ENCODE measurements at regions of chr1 and their contacts with region 1.

Region 1: DNA sequence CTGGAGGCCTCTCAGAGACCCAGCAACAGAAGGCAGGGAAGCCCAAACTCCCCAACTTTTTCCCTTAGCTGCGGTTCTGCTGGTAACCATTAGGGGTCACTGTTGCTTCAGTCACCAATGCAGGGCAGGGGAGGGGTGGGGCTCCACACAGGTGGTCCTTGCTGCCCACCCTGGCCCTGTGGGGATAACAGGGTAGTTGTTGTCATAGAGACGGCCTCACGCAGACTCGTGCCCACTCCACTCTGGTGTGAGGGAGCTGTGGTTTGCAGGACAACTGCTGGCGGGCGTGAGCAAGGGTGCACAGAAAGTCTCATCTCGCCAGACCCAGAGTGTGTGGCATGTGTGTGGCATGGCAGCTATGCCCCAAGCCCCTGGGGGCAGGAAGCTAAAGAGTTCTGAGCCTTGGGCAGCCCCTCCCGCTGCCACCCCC is 19.9 kb downstream of the INSRR start:
- DNase-seq: peak; percentile 58
- H3K4me3 Mint-ChIP-seq: no peak overlapping the region
- H3K27ac Mint-ChIP-seq: no peak overlapping the region
- H3K4me1 Mint-ChIP-seq: peaks cover 26% of the 10 kb centered on the region
- H3K27me3 Mint-ChIP-seq: peaks cover 34% of the 10 kb centered on the region

Region 2: DNA sequence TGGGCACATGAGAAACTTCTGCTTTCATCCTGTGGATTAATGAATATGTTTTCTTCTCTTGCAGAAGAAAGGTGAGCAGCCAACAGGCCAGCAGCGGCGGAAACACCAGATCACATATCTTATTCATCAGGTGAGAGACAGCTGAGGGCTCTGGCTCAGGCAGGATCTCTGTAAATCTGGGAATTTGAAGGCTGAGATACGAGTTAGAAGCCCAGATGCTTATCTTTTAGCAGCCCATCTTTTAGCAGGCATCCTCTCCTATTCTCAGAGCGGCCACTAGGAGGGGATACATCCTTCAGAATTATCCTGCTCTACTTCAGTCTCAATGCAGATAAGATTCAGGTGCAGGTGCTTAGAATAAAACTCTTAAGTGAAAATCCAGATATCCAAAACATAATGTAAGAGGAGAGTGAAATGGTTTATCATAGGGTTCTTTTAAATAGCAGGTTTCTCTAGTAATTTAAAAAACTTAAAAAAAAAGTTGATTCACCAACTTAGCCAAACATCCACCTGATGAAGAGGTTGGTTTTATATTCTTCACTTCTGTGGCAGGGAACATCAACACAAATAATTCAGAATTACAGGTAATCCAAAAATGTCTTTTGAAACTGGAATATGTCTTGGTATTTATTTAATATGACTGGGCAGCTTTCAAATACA is 41.7 kb before region 1 on chr1:
- CTCF ChIA-PET with region 1: interaction called, 18 read pairs
- intact Hi-C with region 1: loop called (anchors 1 kb)
- DNase-seq: peak; percentile 78
- H3K4me3 Mint-ChIP-seq: no peak overlapping the region
- H3K27ac Mint-ChIP-seq: no peak overlapping the region
- H3K4me1 Mint-ChIP-seq: no peaks in the 10 kb centered on the region
- H3K27me3 Mint-ChIP-seq: no peaks in the 10 kb centered on the region

Region 3: DNA sequence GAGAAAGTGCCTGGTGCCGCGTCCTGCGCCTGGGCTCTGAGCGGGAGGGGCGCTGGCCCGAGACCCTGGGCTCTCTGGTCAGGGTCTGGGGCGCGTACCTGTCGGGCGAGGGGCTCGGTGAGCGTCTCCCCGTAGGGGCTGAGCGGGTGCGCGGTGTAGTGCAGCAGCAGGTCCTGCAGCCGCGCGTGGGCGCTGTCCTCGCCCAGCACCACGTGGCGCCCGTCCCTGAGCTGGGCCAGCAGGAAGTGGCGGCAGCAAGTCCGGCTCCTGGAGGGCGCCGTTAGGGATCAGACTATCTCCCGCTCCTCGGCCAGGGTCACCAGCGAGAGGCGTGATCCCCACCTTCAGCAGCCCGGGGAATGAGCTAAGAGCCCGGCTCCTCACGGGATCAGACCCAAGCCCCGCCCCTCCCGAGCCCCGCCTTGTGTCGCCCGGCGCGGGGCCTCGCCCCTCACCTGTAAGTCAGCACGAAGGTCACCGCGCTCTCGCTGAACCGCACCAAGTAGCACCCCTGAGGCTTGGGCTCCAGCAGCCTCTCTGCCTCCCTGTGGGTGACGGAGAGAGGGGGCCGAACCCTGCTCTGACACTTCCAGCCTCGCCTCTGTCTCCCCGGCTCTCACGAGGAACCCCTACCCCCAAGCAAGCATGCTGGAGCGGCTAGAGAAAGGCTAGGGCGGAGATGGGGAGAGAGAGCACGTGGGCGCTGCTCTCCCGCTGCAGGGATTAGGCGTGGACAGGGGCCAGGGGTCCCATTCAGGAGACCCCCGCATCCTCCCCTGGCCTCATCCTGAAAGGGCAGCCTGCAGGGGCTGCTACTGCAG is 25.0 kb before region 1 on chr1:
- CTCF ChIA-PET with region 1: interaction called, 13 read pairs
- intact Hi-C with region 1: loop called (anchors 1 kb)
- DNase-seq: peak; percentile 77
- H3K4me3 Mint-ChIP-seq: peak overlapping the region; percentile 93
- H3K27ac Mint-ChIP-seq: peak overlapping the region; percentile 100
- H3K4me1 Mint-ChIP-seq: peaks cover 62% of the 10 kb centered on the region
- H3K27me3 Mint-ChIP-seq: no peaks in the 10 kb centered on the region

Region 4: DNA sequence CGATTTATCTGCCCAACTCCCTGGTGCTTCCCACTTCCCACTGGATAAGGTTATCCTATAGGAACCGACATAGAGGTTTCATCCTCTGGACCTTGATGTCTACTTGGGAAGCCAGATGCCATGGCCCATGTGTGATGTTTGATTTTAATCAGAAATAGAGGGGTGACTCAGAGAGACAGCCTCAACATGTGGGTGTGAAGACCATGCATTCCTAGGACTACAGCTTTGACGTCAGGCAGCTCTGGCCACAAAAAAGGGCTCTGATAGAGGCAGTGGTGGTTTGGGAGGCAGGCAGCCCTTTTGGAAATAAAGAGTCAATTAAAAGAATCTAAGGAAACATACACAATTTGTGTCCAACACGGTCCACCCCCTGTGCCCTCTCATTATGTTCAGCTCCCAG is 17.2 kb before region 1 on chr1:
- CTCF ChIA-PET with region 1: interaction called, 40 read pairs
- intact Hi-C with region 1: no loop called
- DNase-seq: peak; percentile 67
- H3K4me3 Mint-ChIP-seq: no peak overlapping the region
- H3K27ac Mint-ChIP-seq: no peak overlapping the region
- H3K4me1 Mint-ChIP-seq: peaks cover 25% of the 10 kb centered on the region
- H3K27me3 Mint-ChIP-seq: no peaks in the 10 kb centered on the region

Region 5: GRCh38 chr1:156852418-156852874 is 13.4 kb after region 1 on chr1:
- CTCF ChIA-PET with region 1: interaction called, 133 read pairs
- intact Hi-C with region 1: no loop called
- DNase-seq: no peak
- H3K4me3 Mint-ChIP-seq: no peak overlapping the region
- H3K27ac Mint-ChIP-seq: no peak overlapping the region
- H3K4me1 Mint-ChIP-seq: peaks cover 12% of the 10 kb centered on the region
- H3K27me3 Mint-ChIP-seq: peaks cover 15% of the 10 kb centered on the region

Region 6: DNA sequence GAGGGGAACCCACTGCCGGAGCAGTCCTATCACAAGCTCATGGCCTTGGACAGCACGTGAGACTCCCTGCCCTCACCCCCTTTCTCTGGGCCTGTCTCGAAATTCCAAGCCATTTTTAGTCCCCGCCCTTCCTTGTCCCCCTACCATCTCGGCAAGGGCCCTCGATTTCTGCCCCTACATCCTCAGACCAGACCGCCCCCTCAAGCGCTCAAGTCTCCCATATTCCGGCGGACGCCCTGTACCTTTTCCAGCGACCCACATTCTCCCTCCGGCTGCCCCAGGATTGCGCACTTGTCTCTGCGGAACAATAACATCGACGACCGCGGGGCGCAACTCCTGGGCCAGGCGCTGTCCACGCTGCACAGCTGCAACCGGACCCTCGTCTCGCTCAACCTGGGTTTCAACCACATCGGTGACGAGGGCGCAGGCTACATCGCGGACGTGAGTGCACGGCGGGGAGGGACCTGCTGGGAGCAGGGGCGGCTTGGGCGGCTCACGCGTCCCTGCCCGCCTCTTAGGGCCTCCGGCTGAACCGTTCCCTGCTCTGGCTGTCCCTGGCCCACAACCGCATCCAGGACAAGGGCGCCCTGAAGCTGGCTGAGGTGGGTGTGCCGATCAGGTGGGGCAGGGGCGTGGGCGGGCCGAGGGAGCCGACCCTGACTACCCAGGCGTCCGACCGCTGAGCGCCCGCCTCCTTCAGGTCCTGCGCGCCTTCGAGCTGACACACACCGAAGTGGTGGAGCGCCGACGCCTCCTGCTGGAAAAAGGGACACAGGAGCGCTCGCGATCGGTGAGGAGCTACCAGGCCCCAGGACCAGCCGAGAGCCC is 88.4 kb after region 1 on chr1:
- CTCF ChIA-PET with region 1: interaction called, 10 read pairs
- intact Hi-C with region 1: no loop called
- DNase-seq: peak; percentile 84
- H3K4me3 Mint-ChIP-seq: no peak overlapping the region
- H3K27ac Mint-ChIP-seq: no peak overlapping the region
- H3K4me1 Mint-ChIP-seq: peaks cover 14% of the 10 kb centered on the region
- H3K27me3 Mint-ChIP-seq: peaks cover 77% of the 10 kb centered on the region

Region 7: DNA sequence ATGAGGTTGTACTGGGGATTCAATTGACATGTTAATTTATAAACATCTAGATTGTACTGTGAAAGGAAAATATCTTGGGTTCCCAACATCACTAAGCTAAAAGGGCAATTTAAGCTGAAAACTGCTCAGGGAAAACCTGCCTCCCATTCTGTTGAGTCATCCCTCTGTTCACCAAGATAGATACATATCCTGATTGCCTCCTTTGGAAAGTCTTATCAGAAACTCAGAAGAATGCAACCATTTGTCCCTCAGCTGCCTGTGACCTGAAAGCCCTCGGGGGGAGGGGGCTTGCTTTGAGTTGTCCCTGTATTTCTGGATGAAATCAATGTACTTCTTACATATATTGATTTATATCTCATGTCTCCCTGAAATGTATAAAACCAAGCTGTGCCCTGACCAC is 486.2 kb after region 1 on chr1:
- CTCF ChIA-PET with region 1: no interaction called
- intact Hi-C with region 1: no loop called
- DNase-seq: no peak
- H3K4me3 Mint-ChIP-seq: no peak overlapping the region
- H3K27ac Mint-ChIP-seq: no peak overlapping the region
- H3K4me1 Mint-ChIP-seq: no peaks in the 10 kb centered on the region
- H3K27me3 Mint-ChIP-seq: peaks cover 20% of the 10 kb centered on the region

Measured in activated naive CD4-positive, alpha-beta T cell treated with anti-CD3 and anti-CD28 coated beads for 36 hours (primary cell).